CD4-positive, alpha-beta T cell (primary cell): ENCODE measurements at regions of chr11 and their contacts with region 1.

Region 1: DNA sequence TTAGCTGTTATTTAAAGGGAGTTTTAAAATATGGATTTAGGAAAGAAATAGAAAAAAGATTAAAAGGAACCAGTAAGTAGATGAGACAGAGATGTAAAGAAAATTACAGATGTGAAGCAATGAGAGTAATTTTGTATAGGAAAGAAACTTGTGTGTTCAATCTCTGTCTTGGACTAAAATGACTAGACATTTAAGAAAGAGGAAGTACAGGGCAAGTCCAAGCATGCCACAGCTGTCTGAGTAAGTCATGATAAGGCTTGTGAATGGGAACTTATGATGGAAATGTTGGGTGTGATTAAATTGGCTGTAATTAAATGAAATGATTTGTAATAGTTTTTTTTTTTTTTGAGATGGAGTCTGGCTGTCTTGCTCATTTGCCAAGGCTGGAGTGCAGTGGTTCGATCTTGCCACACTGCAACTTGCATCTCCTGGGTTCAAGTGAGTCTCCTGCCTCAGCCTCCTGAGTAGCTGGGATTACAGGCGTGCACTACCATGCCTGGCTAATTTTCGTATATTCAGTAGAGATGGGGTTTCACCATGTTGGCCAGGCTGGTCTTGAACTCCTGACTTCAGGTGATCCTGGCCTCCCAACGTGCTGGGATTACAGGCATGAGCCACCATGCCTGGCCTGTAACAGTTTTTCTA is 5.9 kb upstream of the ACY3 start:
- DNase-seq: peak in 1 of 14 experiments; percentile 14
- ATAC-seq: no peak
- H3K4me3 ChIP-seq: no peak overlapping the region
- H3K4me3 Mint-ChIP-seq: no peak overlapping the region
- H3K27ac ChIP-seq: no peak overlapping the region
- H3K27ac Mint-ChIP-seq: no peak overlapping the region
- H3K4me1 ChIP-seq: peaks cover 3% of the 10 kb centered on the region
- H3K4me1 Mint-ChIP-seq: no peaks in the 10 kb centered on the region
- H3K27me3 ChIP-seq: no peaks in the 10 kb centered on the region
- H3K27me3 Mint-ChIP-seq: no peaks in the 10 kb centered on the region
- CTCF ChIP-seq: no peak

Region 2: GRCh38 chr11:67492801-67493547 is 163.4 kb before region 1 on chr11:
- CTCF ChIA-PET with region 1: no interaction called
- POLR2A ChIA-PET with region 1: no interaction called
- intact Hi-C with region 1: no loop called
- DNase-seq: peak in 2 of 14 experiments; percentile 34 to 53
- ATAC-seq: peak; percentile 41
- H3K4me3 ChIP-seq: no peak overlapping the region
- H3K4me3 Mint-ChIP-seq: no peak overlapping the region
- H3K27ac ChIP-seq: peak overlapping the region in 1 of 2 donors; percentile 34
- H3K27ac Mint-ChIP-seq: no peak overlapping the region
- H3K4me1 ChIP-seq: peaks cover 26% of the 10 kb centered on the region
- H3K4me1 Mint-ChIP-seq: peaks cover 16% of the 10 kb centered on the region
- H3K27me3 ChIP-seq: no peaks in the 10 kb centered on the region
- H3K27me3 Mint-ChIP-seq: no peaks in the 10 kb centered on the region
- CTCF ChIP-seq: no peak

Region 3: GRCh38 chr11:67640021-67640757 is 16.2 kb before region 1 on chr11:
- CTCF ChIA-PET with region 1: interaction called, 4 read pairs
- POLR2A ChIA-PET with region 1: no interaction called
- intact Hi-C with region 1: loop called in 1 of 2 experiments (anchors 2 kb)
- DNase-seq: peak in 13 of 14 experiments; percentile 39 to 79 (median 48)
- ATAC-seq: peak; percentile 84
- H3K4me3 ChIP-seq: no peak overlapping the region
- H3K4me3 Mint-ChIP-seq: no peak overlapping the region
- H3K27ac ChIP-seq: no peak overlapping the region
- H3K27ac Mint-ChIP-seq: no peak overlapping the region
- H3K4me1 ChIP-seq: peaks cover 6% of the 10 kb centered on the region
- H3K4me1 Mint-ChIP-seq: no peaks in the 10 kb centered on the region
- H3K27me3 ChIP-seq: no peaks in the 10 kb centered on the region
- H3K27me3 Mint-ChIP-seq: no peaks in the 10 kb centered on the region
- CTCF ChIP-seq: peak; percentile 48